Ascending aorta (tissue), 2 donors: ENCODE measurements at regions of chr5 and their contacts with region 1.

Region 1: GRCh38 chr5:172106511-172107356 is 81.3 kb downstream of the STK10 start:
- DNase-seq: peak in 1 of 2 donors; percentile 76
- H3K4me3 ChIP-seq: peak overlapping the region in 1 of 2 donors; percentile 25
- H3K27ac ChIP-seq: no peak overlapping the region
- H3K4me1 ChIP-seq: peaks cover 2 to 20% of the 10 kb centered on the region in 2 donors
- H3K27me3 ChIP-seq: no peaks in the 10 kb centered on the region
- CTCF ChIP-seq: peak; percentile 69 to 100 (median 100)

Region 2: DNA sequence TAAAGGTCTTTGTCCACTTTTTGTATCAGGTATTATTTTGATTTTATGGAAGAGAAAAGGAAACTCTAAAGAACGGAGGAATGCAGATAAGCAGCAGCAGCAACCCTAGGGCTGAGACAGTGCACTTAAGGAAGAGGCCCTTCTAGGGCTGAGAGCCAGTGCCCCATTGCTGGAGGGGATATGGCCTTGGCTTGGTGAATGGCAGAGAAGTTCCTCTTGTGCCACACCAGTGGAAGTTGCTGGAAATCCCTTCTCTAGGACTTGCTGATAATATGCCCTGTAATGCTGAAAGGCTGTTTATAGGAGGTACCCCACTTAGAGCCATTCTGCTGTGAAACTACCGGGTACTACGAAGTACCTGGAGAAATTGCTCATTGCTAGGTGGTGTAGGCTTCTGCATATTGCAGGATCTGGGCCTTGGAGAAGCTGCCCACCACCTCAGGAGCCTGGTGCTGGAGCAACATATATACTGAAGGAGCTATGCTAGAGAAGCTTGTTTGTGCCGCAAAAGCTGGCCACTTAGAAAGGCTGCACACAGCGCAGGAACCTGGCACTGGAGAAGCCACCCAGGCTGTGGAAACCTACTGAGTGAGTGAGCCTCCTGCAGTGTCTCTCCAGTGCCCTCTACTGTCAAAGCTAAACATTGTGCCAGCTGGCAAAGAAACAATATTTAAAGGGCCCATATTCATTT is 186.5 kb after region 1 on chr5:
- intact Hi-C with region 1: loop called (anchors 1 kb)
- DNase-seq: peak in 1 of 2 donors; percentile 80
- H3K4me3 ChIP-seq: no peak overlapping the region
- H3K27ac ChIP-seq: no peak overlapping the region
- H3K4me1 ChIP-seq: no peaks in the 10 kb centered on the region
- H3K27me3 ChIP-seq: no peaks in the 10 kb centered on the region
- CTCF ChIP-seq: peak; percentile 66 to 80 (median 71)

Region 3: GRCh38 chr5:172370648-172371545 is 264.2 kb after region 1 on chr5:
- intact Hi-C with region 1: loop called (anchors 5 kb)
- DNase-seq: no peak
- H3K4me3 ChIP-seq: no peak overlapping the region
- H3K27ac ChIP-seq: peak overlapping the region in 1 of 2 donors; percentile 27
- H3K4me1 ChIP-seq: no peaks in the 10 kb centered on the region
- H3K27me3 ChIP-seq: no peaks in the 10 kb centered on the region
- CTCF ChIP-seq: peak; percentile 42 to 58 (median 47)